ENCODE measurements at regions of chr1 and their contacts with region 1.

Region 1: DNA sequence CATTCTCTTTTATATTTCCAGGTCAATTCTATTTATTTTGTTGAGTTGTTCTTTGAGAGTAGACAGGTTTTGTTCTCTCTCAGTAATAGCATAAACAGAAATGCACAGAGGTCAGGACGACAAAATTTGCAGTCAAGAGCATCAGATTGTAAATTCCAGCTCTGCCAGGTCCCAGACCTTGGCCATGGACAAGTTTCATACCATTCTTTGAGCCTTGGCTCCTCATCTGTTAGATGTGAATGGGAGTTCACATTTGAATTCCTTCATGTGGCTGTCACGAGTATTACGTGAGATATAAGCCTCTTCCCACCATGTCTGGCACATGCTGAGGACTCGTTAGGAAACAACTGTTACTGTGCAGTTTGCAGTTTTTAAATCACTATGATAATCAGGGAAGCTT is 93.2 kb upstream of the KCTD3 start:
- DNase-seq: no peak
- H3K4me3 ChIP-seq: no peak overlapping the region
- H3K27ac ChIP-seq: no peak overlapping the region
- H3K4me1 ChIP-seq: no peaks in the 10 kb centered on the region
- H3K27me3 ChIP-seq: no peaks in the 10 kb centered on the region
- CTCF ChIP-seq: no peak
- POLR2A ChIP-seq: no peak

Region 2: DNA sequence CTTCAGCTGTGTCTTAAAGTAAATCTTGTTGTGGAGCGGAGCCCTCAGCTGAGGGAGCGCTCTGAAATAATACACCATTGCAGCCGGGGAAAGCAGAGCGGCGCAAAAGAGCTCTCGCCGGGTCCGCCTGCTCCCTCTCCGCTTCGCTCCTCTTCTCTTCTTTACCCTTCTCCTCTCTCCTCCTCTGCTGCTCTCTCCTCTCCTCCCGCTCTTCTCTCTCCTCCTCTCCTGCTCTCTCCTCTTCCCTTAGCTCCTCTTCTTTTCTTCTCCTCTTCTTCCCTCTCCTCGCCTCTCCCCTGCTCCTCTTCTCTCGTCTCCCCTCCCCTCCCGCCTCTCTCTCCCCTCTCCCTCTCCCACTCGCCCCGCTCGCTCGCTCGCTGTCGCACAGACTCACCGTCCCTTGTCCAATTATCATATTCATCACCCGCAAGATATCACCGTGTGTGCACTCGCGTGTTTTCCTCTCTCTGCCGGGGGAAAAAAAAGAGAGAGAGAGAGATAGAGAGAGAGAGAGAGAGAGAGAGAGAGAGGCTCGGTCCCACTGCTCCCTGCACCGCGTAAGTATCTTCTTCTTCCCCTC is 1485.9 kb before region 1 on chr1 and contains the start of gene PROX1:
- intact Hi-C with region 1: no loop called
- DNase-seq: no peak
- H3K4me3 ChIP-seq: peak within 1 kb of the TSS; percentile 54 to 75 (median 65)
- H3K27ac ChIP-seq: peak within 1 kb of the TSS; percentile 83 to 86
- H3K4me1 ChIP-seq: peaks cover 0 to 4% of the 10 kb centered on the region in 2 donors
- H3K27me3 ChIP-seq: peaks cover 2 to 37% of the 10 kb centered on the region in 2 donors
- CTCF ChIP-seq: no peak
- POLR2A ChIP-seq: peak; percentile 63
- total RNA-seq, gene PROX1: 1.8 to 7.5 (median 5.7) TPM

Region 3: DNA sequence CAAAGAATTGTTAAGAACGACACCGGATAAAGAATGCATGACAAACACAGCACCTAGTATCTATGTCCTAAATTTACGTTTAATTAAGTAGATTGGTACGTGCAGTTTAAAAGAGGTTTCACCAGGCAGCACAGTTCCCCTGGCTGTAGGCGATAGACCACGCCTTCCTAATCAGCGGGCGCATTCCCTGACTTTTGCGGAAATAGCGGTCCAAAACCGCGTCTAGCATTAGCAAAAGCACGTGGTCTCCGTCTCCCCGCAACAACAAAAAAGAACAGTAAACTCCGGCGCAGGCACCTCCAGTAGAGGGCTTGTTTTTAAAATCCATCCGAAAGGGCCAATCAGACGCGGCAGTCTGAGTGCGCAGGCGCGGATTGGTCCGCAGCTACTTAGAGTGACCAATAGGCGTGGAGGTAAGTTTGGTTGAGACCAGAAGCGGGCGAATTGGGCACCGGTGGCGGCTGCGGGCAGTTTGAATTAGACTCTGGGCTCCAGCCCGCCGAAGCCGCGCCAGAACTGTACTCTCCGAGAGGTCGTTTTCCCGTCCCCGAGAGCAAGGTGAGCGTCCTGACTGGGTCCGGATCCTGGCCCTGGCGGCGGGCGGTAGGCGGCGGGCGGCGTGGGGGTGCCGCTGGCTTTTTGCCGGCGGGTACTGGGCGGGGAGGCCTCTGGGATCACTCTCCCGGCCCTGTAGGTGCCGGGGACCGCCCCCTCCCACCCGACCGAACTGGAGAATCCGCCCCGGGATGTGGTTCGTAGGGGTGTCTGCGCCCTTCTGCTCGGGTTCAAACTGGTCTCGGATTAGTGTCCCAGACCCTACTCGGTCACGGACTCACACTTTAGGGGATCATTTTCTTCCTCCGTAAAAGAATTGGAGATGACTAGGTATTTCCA is 870.9 kb before region 1 on chr1 and contains the start of gene CENPF:
- intact Hi-C with region 1: loop called (anchors 5 kb)
- DNase-seq: peak; percentile 96
- H3K4me3 ChIP-seq: peak within 1 kb of the TSS; percentile 71 to 97 (median 77)
- H3K27ac ChIP-seq: peak within 1 kb of the TSS in 1 of 2 donors; percentile 12
- H3K4me1 ChIP-seq: no peaks in the 10 kb centered on the region
- H3K27me3 ChIP-seq: no peaks in the 10 kb centered on the region
- CTCF ChIP-seq: peak in 2 of 3 donors; percentile 10 to 44
- POLR2A ChIP-seq: no peak
- total RNA-seq, gene CENPF: 1.3 to 4.0 (median 1.9) TPM